Esophagus muscularis mucosa (tissue), 4 donors: ENCODE measurements at regions of chr12 and their contacts with region 1.

Region 1: GRCh38 chr12:92145731-92146496 is at the start of gene BTG1:
- DNase-seq: peak; percentile 100
- H3K4me3 ChIP-seq: peak within 1 kb of the TSS; percentile 77 to 97 (median 91)
- H3K27ac ChIP-seq: peak within 1 kb of the TSS; percentile 99
- H3K4me1 ChIP-seq: peaks cover 0 to 14% (median 12%) of the 10 kb centered on the region in 4 donors
- H3K27me3 ChIP-seq: no peaks in the 10 kb centered on the region
- CTCF ChIP-seq: no peak
- EP300 ChIP-seq: no peak
- POLR2A ChIP-seq: peak; percentile 99
- total RNA-seq, gene BTG1: 40.6 to 66.4 (median 43.1) TPM

Region 2: DNA sequence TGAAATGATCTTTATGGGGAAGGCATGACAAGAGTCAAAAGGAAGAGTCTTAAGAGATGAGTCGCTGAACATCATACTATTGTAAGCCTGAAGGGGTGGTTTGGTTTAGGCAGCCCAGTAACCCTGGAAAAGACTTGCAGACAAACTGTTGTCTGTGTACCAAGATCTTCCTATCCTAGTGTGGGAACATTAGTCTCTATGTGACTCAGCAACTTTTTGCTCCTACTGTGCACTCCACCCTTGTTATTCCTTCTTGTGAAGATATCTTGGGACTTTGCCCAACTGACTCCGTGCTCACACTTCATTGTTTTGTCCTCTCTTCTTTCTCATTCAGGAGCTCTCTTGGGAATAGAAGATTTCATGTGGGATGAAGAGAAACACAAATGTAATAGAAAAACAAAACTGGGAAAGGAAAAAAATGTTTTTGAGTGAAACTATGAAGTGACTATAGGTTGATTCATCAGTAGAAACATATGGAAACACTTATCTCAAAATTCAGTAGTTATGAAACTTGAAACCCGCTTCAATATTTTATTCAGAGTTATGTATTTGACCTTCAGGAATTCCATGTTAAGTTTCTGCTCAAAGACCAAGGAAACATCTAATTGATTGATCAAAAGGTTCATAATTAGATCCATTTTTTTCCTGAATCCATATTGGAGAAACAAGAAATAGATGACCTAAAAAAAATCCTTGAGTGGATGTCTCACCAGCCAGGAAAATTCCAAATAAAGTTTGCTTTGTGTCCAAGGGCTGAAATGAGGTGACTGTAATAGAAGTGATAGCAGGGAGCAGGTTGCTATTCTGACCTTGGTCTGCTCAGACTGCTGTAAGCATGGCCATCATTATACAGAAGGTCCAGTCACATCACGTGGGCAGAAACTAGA is 67.5 kb before region 1 on chr12:
- intact Hi-C with region 1: loop called (anchors 5 kb)
- DNase-seq: no peak
- H3K4me3 ChIP-seq: no peak overlapping the region
- H3K27ac ChIP-seq: peak overlapping the region in 1 of 4 donors; percentile 42
- H3K4me1 ChIP-seq: peaks cover 23 to 56% (median 37%) of the 10 kb centered on the region in 4 donors
- H3K27me3 ChIP-seq: no peaks in the 10 kb centered on the region
- CTCF ChIP-seq: no peak
- EP300 ChIP-seq: no peak
- POLR2A ChIP-seq: no peak

Region 3: GRCh38 chr12:92244036-92244435 is 98.1 kb after region 1 on chr12:
- intact Hi-C with region 1: loop called (anchors 10 kb)
- DNase-seq: no peak
- H3K4me3 ChIP-seq: no peak overlapping the region
- H3K27ac ChIP-seq: peak overlapping the region; percentile 14 to 75 (median 57)
- H3K4me1 ChIP-seq: peaks cover 12 to 23% (median 22%) of the 10 kb centered on the region in 4 donors
- H3K27me3 ChIP-seq: no peaks in the 10 kb centered on the region
- CTCF ChIP-seq: peak; percentile 26 to 38 (median 35)
- EP300 ChIP-seq: peak; percentile 54
- POLR2A ChIP-seq: no peak

Region 4: DNA sequence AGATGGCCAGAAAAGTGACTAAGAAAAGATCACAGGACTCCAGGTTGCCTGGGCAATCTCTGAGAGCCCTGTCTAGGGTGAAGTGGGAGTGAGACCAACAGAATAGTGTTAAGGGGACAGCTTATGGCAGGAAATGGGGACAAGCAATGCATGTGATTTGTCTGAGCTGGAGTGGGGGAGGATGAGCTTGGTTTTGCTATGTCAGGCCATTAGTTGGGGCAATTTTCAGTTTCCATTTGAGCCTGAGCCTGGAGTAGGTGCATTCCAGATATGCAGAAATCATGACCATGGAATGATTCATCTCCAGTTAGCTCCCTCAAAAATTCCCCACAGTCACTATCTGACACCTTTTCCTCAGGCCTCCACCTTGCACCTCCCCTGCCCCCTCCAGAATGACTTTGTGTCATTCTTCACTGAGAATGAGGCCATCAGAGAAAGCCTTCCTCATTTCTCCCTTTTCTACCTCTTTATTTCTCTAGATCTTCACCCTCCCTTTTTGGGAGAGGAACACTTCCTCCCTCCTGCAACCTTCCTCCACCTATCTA is 406.0 kb after region 1 on chr12:
- intact Hi-C with region 1: loop called (anchors 10 kb)
- DNase-seq: no peak
- H3K4me3 ChIP-seq: no peak overlapping the region
- H3K27ac ChIP-seq: no peak overlapping the region
- H3K4me1 ChIP-seq: peaks cover 25 to 35% (median 33%) of the 10 kb centered on the region in 4 donors
- H3K27me3 ChIP-seq: no peaks in the 10 kb centered on the region
- CTCF ChIP-seq: no peak
- EP300 ChIP-seq: no peak
- POLR2A ChIP-seq: no peak